Heart right ventricle (tissue), 16 donors: ENCODE measurements at regions of chr17 and their contacts with region 1.

Region 1: DNA sequence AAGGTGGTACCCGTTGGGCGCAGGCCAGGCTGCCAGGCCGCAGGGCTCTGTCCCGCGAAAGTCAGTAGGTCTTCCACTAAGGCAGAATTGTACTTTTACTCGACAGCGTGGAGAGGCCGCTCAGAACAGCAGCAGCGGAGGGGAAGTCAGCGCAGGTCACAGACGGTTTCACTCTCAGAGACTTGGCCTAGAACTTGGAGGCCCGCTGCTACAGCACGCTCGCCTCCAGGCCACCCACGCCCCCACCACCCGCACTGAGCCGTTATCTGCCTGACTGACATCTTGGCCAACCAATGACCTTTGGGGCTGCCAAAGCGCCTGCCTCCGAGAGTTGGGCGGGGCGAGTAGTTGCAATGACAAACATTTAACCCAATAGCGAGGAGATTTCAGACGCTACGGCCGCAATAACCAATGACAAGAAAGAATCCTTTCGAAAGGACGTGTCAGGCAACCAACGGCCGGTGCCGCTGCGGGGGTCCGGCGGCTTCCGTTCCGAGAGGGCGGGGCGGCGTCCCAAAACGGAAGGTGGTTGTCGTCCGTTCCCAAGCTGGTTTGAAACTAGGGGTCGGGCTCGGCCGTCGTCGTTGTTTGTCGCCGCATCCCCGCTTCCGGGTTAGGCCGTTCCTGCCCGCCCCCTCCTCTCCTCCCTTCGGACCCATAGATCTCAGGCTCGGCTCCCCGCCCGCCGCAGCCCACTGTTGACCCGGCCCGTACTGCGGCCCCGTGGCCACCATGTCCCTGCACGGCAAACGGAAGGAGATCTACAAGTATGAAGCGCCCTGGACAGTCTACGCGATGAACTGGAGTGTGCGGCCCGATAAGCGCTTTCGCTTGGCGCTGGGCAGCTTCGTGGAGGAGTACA is at the start of gene DCAF7:
- DNase-seq: peak; percentile 97 to 100
- ATAC-seq: peak; percentile 98 to 99 (median 98)
- H3K4me3 ChIP-seq: peak within 1 kb of the TSS; percentile 85 to 100 (median 96)
- H3K27ac ChIP-seq: peak within 1 kb of the TSS; percentile 78 to 98 (median 93)
- H3K4me1 ChIP-seq: peaks cover 3 to 52% (median 47%) of the 10 kb centered on the region in 9 donors
- H3K27me3 ChIP-seq: no peaks in the 10 kb centered on the region
- CTCF ChIP-seq: peak in 1 of 9 donors; percentile 12
- total RNA-seq, gene DCAF7: 35.2 to 60.7 (median 42.8) TPM

Region 2: GRCh38 chr17:63304704-63305261 is 245.4 kb before region 1 on chr17:
- intact Hi-C with region 1: no loop called
- DNase-seq: no peak
- ATAC-seq: no peak
- H3K4me3 ChIP-seq: no peak overlapping the region
- H3K27ac ChIP-seq: no peak overlapping the region
- H3K4me1 ChIP-seq: no peaks in the 10 kb centered on the region
- H3K27me3 ChIP-seq: no peaks in the 10 kb centered on the region
- CTCF ChIP-seq: no peak

Region 3: DNA sequence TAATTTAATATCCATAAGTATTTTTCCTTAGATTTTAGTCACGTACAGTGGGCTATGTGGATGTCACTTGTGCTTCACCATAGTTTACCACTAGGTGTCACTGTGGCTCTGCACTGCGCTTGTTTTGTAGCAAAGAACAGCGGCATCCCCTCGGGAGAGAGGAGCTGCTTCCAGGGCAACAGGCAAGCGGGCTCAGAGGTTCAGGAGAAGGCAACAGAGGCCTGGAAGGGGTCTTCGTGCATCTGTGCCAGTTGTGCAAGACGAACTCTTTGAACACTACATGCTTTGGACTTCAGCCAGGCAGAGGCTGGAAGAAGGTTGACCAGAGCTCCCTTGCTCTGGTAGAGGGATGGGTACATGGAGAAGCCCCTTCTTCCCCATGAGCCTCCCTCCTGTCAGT is 124.7 kb before region 1 on chr17:
- intact Hi-C with region 1: loop called in 1 of 10 experiments (anchors 5 kb)
- DNase-seq: peak; percentile 63 to 84
- ATAC-seq: peak; percentile 75 to 88 (median 86)
- H3K4me3 ChIP-seq: no peak overlapping the region
- H3K27ac ChIP-seq: no peak overlapping the region
- H3K4me1 ChIP-seq: peaks cover 0 to 49% (median 25%) of the 10 kb centered on the region in 9 donors
- H3K27me3 ChIP-seq: no peaks in the 10 kb centered on the region
- CTCF ChIP-seq: peak; percentile 89 to 98 (median 98)

Region 4: DNA sequence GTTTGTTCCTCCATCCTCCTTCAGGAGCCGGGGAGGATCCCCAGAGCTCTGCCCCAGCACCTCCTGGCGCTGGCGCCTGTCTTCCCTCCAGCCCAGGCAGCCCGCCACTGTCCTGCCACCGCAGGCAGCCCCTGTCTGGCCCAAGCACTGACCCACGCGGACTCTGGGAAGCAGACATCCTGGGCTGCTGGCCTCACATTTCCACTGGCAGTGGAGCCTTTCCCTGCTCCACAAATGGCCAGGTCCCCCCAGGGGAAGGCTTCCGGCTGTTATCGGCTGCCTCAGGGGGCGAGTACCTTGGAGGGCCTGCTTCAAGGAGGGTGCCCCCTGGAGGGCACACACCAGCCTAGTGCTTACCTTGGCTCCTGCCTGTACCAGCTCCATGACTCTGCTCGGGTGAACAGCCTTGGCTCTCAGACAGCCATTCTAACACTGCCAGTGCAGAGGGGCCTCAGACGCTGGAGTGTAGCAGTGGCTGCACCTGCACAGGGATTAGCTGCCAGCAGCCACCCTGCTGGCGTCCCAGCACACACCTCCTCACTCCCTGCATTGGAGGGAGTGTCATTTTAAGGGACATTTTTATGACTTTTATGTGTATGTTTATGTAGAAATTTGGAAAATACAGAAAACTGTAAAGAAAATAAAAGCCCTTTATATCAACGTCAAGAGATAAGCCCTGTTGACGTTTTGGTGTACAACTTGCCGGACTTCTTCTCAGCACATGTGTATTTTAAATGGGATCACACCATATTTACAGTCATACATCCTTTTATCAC is 52.3 kb before region 1 on chr17:
- intact Hi-C with region 1: loop called in 1 of 10 experiments (anchors 10 kb)
- DNase-seq: no peak
- ATAC-seq: peak in 1 of 8 donors; percentile 13
- H3K4me3 ChIP-seq: no peak overlapping the region
- H3K27ac ChIP-seq: no peak overlapping the region
- H3K4me1 ChIP-seq: peaks cover 0 to 6% (median 0%) of the 10 kb centered on the region in 9 donors
- H3K27me3 ChIP-seq: peaks cover 0 to 13% (median 0%) of the 10 kb centered on the region in 7 donors
- CTCF ChIP-seq: peak in 7 of 9 donors; percentile 7 to 30 (median 17)

Region 5: DNA sequence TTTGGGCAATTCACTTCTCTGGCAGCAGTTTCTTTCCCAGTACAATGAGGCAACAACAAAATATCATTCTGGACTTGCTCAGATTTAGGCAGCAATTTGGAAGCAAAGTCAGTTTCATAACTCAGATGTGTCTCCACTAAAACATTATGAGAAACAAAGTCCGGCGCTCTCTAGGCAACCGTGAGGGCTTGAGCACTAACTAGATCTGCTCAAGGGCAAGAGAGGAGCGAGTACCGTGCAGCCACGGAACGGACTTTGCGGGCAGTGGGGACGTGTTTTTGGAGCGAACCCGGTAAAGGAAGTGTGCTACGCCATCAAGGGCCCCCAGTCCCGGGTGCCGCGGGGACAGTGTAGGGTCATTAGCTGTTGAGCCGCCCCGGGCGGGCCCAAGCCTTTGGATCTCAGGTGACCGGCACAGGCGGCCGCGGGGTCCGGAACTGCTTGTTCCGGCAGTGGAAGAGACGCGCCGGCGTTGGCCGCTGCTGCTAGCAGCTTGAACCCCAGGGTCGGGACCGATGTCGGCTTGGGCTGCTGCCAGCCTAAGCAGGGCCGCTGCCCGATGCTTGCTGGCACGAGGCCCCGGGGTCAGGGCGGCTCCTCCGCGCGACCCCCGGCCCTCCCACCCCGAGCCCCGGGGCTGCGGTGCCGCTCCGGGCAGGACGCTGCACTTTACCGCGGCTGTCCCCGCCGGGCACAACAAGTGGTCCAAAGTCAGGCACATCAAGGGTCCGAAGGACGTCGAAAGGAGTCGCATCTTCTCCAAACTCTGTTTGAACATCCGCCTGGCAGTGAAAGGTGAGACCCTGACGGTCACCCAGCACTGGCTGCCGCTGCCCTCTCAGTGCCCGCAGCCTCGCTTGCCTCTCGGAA is 50.6 kb after region 1 on chr17 and contains the start of gene TACO1:
- intact Hi-C with region 1: loop called in 1 of 10 experiments (anchors 10 kb)
- DNase-seq: peak; percentile 84 to 85
- ATAC-seq: peak; percentile 94 to 98 (median 97)
- H3K4me3 ChIP-seq: peak within 1 kb of the TSS; percentile 73 to 100 (median 96)
- H3K27ac ChIP-seq: peak within 1 kb of the TSS; percentile 68 to 98 (median 94)
- H3K4me1 ChIP-seq: peaks cover 0 to 29% (median 16%) of the 10 kb centered on the region in 9 donors
- H3K27me3 ChIP-seq: no peaks in the 10 kb centered on the region
- CTCF ChIP-seq: no peak
- total RNA-seq, gene TACO1: 37.2 to 51.4 (median 45.2) TPM

Region 6: DNA sequence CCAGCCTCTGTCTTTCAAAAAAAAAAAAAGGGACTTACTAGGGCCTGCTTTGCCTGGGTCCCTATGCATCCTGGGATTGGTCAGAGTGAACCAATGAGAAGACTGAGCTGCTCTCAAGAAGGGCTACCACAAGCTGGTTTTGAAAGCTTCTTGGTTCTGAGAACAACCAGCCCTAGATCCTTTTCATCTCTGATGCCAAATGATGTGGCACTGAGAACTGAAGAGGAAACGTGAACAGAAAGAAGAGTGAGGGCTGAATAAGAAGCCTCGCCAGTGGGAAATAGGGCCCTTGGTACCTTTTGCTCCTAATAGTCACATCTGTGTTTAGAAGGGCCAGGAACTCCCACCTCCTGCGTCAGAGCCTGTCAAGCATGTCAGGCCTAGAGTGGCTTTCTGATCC is 61.2 kb after region 1 on chr17:
- intact Hi-C with region 1: loop called in 2 of 10 experiments (anchors 10 kb)
- DNase-seq: no peak
- ATAC-seq: no peak
- H3K4me3 ChIP-seq: no peak overlapping the region
- H3K27ac ChIP-seq: peak overlapping the region in 1 of 10 donors; percentile 62
- H3K4me1 ChIP-seq: no peaks in the 10 kb centered on the region
- H3K27me3 ChIP-seq: no peaks in the 10 kb centered on the region
- CTCF ChIP-seq: no peak